Heart right ventricle (tissue), 16 donors: ENCODE measurements at regions of chr1 and their contacts with region 1.

Region 1: DNA sequence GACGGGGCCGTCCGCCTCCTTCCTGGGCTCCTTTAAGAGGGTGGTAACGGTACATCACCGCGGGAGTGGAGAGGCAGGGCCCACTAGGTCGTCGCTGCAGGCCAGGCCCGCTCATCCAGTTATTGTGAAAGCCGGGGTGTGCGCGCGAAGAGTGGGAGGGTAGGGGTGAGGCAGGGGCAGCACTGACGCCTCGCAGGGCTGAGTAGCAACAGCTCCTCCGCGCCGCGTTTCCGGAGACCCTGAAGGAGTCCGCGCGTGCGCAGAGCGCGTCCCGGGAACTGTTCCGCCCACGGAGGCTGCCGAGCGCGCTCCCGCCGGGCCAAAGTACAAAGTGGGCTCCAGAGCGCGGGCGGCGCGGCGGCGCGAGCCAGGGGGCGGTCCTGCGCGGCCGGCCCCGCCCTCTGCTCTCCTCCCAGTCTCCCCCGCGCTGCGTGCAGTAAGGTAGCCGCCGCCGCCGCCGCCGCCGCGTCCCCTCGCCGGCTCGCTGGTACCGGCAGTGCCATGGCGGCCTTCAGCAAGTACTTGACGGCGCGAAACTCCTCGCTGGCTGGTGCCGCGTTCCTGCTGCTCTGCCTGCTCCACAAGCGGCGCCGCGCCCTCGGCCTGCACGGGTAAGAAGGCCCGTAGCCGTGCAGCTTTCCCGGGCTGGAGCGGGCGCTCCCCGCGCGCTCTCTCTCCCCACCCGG is at the start of gene ABCD3:
- DNase-seq: peak; percentile 97 to 98
- ATAC-seq: peak; percentile 96 to 99 (median 98)
- H3K4me3 ChIP-seq: peak within 1 kb of the TSS; percentile 59 to 98 (median 93)
- H3K27ac ChIP-seq: peak within 1 kb of the TSS; percentile 81 to 97 (median 92)
- H3K4me1 ChIP-seq: peaks cover 0 to 50% (median 41%) of the 10 kb centered on the region in 9 donors
- H3K27me3 ChIP-seq: peaks cover 0 to 4% (median 0%) of the 10 kb centered on the region in 7 donors
- CTCF ChIP-seq: peak in 1 of 9 donors; percentile 6
- total RNA-seq, gene ABCD3: 49.0 to 90.0 (median 60.7) TPM

Region 2: GRCh38 chr1:94358630-94359599 is 59.2 kb before region 1 on chr1:
- intact Hi-C with region 1: loop called in 1 of 10 experiments (anchors 2 kb)
- DNase-seq: peak; percentile 14 to 37
- ATAC-seq: peak in 7 of 8 donors; percentile 58 to 95 (median 91)
- H3K4me3 ChIP-seq: no peak overlapping the region
- H3K27ac ChIP-seq: peak overlapping the region; percentile 18 to 70 (median 56)
- H3K4me1 ChIP-seq: peaks cover 0 to 15% (median 6%) of the 10 kb centered on the region in 9 donors
- H3K27me3 ChIP-seq: peaks cover 0 to 3% (median 0%) of the 10 kb centered on the region in 7 donors
- CTCF ChIP-seq: no peak